ENCODE measurements at regions of chr10 and their contacts with region 1.

Region 1: DNA sequence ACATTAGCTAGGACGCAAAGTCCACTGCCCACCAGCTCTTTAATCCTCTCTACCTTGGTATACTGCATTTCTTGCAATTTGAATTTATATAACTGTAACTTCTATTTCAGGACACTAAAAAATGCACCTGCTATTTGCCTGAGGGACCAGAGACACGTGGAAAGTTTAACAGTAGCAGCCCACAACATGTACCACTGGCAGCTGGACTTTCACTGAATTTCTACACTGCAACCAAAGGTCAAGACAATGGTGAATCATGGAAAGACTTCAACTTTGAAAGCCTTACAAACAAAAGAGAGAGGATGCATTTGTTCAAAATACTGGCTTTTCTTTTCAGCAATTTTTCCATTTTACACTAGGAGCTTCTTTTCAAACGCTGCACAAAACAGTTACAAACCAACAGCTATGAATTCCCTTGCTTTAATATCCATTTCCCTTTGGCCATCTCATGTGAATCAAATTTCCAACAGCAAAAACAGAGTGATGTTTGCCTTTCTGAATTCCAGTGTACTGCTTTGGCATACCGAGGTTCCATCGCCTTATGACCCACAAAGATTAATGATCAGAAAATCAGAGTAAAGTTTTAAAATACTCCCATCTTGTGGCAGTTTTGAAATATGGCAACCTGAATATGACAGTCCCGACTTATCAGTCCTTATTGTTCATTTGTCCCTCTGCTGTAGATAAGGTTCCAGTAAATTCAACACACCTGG is 29.9 kb upstream of the HNRNPH3 start:
- DNase-seq: peak; percentile 53 to 72
- ATAC-seq: peak; percentile 82 to 88; a peak in 5 of 6 replicates
- H3K4me3 ChIP-seq: no peak overlapping the region
- H3K27ac ChIP-seq: no peak overlapping the region
- H3K4me1 ChIP-seq: peaks cover 31% of the 10 kb centered on the region
- CTCF ChIP-seq: peak; percentile 76
- EP300 ChIP-seq: no peak
- POLR2A ChIP-seq: no peak
- RAD21 ChIP-seq: peak; percentile 82 to 85

Region 2: DNA sequence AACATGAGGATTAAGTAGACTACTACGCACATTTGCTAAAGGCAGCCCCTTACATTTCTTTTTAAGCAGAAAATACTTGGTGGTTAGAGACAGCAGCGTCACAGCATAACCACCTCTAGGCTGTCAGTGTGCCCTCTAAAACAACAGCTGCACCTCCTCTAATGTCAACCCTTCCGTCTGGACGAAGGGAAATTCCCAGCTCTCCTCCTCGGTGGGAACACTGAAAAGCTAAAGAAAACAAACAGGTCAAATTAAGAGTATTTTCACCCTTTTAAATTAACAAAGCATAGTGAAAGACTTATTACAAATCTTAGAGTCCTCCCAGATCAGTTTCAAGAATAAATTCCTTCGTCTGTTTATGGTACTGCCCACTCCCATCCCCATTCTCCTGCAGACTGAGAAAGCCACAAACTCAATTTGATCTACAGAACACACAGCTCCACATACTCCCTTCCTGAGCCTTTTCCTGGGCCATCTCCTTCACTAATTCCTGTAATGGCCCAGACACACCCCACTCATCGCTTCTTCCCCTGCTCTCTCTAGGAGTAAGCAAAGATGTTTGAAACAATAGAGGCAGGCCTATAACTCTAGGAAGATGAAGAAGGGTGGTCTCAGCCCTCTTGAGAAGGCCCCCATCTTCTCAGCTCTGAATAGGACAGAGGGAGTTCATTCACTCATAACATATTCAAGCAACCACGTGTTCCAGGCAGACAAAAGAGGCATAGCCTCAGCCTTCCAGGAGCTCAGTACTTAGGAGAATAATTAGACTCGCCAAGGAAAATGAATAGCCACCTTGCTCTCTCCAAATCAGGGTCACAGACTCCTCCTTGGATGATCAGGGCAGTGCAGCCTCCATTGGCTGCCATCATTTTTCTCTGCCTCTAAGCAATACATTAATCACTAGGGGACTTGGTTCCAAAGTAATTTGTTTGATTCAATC is 17.6 kb before region 1 on chr10:
- CTCF ChIA-PET with region 1: interaction called, 44 read pairs
- POLR2A ChIA-PET with region 1: no interaction called
- DNase-seq: no peak
- ATAC-seq: no peak
- H3K4me3 ChIP-seq: no peak overlapping the region
- H3K27ac ChIP-seq: no peak overlapping the region
- H3K4me1 ChIP-seq: no peaks in the 10 kb centered on the region
- CTCF ChIP-seq: no peak
- EP300 ChIP-seq: no peak
- POLR2A ChIP-seq: no peak
- RAD21 ChIP-seq: no peak

Region 3: DNA sequence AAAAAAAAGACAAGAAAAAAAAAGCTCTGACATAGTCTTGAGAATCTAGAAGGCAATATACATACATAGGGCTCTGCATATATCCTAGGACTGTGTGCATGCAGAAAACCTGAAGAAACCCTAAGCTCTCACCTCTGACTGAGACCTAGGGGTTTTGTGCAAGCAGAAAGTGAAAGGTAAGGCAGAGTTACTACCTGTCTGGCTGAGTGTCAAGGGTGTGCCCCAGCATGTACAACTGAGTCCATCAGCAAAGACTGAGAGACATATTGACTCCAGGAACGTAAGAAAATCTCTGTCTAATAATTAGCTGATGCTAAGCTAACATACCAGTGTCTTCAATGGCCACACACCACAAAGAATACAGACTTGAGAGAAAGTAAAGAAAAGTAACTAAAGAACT is 13.6 kb after region 1 on chr10:
- CTCF ChIA-PET with region 1: interaction called, 41 read pairs
- POLR2A ChIA-PET with region 1: no interaction called
- DNase-seq: no peak
- ATAC-seq: no peak
- H3K4me3 ChIP-seq: no peak overlapping the region
- H3K27ac ChIP-seq: no peak overlapping the region
- H3K4me1 ChIP-seq: no peaks in the 10 kb centered on the region
- CTCF ChIP-seq: no peak
- EP300 ChIP-seq: no peak
- POLR2A ChIP-seq: no peak
- RAD21 ChIP-seq: no peak

Measured in A549 (cell line).